IMR-90 (cell line): ENCODE measurements at regions of chr1 and their contacts with region 1.

Region 1: DNA sequence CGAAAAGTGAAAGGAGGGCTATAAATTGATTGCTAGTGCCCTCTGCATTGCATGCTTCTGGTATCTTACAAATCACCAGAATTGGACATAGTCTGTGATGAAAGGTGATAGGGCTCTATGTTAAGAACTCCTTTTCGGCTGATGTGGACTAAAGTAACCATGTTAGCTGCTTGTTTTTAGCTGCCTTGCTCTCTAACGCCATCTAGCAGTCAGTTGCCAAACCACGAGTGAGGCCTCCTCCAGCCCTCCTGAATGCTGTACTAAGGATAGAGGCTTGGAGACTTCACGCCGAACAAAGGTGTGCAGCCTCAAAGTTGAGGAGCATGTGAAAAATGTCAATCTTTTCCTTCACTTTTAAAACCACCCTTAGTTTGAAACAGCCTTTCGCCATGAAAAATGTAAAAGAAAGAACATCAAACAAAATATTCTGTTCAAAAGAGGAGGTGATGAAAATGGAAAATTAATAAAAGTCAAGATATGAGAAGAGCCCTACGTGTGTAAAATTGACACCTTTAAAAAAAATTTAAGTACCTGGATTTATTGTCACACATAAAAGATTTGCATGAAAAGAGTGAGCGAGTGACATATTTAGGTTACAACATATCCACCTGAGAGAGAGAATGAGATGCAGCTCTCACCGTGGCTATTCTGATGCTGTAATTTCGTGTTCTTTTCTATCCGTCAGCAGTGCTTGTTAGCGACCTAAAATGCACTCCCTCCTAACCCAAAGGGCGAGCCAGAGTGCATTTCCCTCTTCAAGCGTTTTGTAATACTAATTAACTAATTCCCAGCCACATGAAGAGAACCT is 8.1 kb downstream of the LRRC53 start:
- DNase-seq: peak; percentile 50
- ATAC-seq: peak; percentile 87
- H3K4me3 ChIP-seq: no peak overlapping the region
- H3K27ac ChIP-seq: no peak overlapping the region
- H3K4me1 ChIP-seq: no peaks in the 10 kb centered on the region
- H3K27me3 ChIP-seq: no peaks in the 10 kb centered on the region
- CTCF ChIP-seq: peak; percentile 87
- POLR2A ChIP-seq: no peak
- RAD21 ChIP-seq: peak; percentile 86

Region 2: GRCh38 chr1:74689621-74690363 is 185.5 kb after region 1 on chr1:
- CTCF ChIA-PET with region 1: no interaction called
- POLR2A ChIA-PET with region 1: no interaction called
- dilution Hi-C with region 1: no loop called
- in situ Hi-C with region 1: no loop called
- intact Hi-C with region 1: loop called (anchors 10 kb)
- DNase-seq: peak; percentile 52
- ATAC-seq: peak; percentile 75; the same call in 1 of the 2 replicates
- H3K4me3 ChIP-seq: no peak overlapping the region
- H3K27ac ChIP-seq: no peak overlapping the region
- H3K4me1 ChIP-seq: no peaks in the 10 kb centered on the region
- H3K27me3 ChIP-seq: no peaks in the 10 kb centered on the region
- CTCF ChIP-seq: peak; percentile 82
- POLR2A ChIP-seq: no peak
- RAD21 ChIP-seq: peak; percentile 82